ENCODE measurements at regions of chr4 and their contacts with region 1.

Region 1: DNA sequence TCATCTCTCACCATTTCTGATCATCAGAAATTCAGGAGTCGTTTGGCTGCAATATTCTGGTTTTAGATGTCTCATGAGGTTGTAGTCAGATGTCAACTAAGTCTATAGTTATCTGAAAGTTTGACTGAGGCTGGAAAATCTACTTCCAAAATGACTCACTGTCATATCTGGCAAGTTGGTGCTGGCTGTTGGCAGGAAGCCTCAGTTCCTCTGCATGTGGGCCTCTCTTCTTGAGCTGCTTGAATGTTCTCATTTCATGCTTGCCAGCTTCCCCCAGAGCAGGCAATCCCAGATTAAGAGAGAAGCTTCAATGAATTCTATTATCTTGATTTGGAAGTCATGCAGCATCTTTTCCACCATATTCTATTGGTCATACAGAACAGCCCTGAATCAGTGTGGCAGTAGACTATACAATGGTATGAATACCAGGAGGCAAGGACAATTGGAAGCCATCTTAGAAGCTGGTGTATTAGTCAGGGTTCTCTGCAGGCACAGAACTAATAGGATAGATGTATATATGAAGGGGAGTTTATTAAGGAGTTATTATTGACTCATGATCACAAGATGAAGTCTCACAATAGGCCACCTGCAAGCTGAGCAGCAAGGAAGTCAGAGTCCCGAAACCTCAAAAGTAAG is 46.8 kb upstream of the ELF2 start:
- DNase-seq: peak; percentile 72
- H3K4me3 ChIP-seq: no peak overlapping the region
- CTCF ChIP-seq: no peak

Region 2: GRCh38 chr4:139200506-139200905 is 23.3 kb before region 1 on chr4:
- in situ Hi-C with region 1: no loop called
- DNase-seq: no peak
- H3K4me3 ChIP-seq: no peak overlapping the region
- CTCF ChIP-seq: no peak

Region 3: DNA sequence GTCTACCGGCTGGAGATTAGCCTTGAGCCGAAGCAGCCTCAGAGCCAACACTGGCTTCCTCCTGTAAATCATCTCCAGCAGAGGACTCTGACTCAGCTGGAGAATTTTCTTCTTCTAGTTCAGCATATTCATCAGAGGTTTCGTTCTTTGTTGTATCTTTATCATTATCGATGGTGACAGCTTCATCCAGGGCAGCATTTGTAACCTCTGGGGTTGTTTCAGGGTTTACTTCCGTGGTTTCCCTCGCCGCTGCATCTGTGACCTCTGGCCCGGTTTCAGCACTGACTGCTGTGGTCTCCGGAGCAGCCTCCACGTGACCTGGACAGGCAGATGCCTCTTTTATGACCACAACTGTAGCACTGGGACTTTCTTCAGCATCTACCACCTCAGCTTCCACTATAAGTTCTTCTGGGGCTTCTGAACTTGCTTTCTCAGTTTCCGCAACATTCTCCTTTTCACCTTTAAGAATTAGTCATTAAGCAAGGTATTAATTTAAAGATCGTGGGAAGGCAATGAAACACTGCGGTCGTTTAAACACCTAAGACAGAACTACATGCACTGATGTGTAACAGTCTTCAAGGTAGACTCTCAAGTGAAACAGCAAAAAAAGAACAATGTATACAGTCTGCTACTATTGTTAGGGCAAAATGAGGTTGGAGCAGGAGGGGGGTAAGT is 42.9 kb after region 1 on chr4:
- in situ Hi-C with region 1: no loop called
- DNase-seq: no peak
- H3K4me3 ChIP-seq: peak overlapping the region; percentile 31
- CTCF ChIP-seq: no peak

Region 4: DNA sequence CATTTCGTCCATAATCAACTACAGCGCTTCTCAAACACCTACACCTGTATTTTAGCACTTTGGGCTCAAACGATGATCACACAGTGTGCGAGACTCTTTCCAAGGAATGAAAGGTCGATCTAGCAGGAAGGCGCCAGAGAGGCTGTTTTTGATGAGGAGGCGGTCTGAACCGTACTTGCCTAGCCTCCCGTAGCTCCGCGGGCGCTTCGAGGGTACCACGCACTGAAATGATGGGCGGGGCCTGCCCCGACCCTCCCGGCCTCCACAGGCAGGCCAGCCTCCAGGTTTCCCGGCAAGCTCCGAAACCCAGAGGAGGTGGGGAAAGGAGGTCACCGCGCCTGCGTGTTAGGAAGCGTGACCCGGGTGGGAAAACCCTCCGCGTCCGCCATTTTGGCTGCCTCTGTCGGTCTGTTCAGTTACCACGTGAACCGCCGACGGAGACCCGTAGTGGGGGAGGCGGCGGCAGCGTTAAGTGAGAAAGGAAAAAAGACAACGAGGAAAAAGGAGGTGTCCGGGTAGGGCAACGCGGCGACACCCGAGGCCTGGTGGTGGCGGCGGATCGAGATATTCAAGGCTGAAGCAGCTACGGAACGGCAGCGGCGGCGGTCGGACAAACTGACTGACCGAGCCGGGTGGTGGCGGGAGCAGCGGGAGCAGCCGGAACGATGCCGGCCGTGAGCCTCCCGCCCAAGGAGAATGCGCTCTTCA is 77.5 kb after region 1 on chr4 and contains the start of gene NAA15:
- in situ Hi-C with region 1: loop called (anchors 5 kb)
- DNase-seq: peak; percentile 94
- H3K4me3 ChIP-seq: peak within 1 kb of the TSS; percentile 69
- CTCF ChIP-seq: no peak

Measured in astrocyte of the cerebellum (primary cell).